GM12878 (cell line): ENCODE measurements at regions of chr14 and their contacts with region 1.

Region 1: GRCh38 chr14:63641473-63642228 is at the start of gene WDR89:
- DNase-seq: peak; percentile 100
- ATAC-seq: peak; percentile 91
- H3K4me3 ChIP-seq: peak within 1 kb of the TSS; percentile 69
- H3K27ac ChIP-seq: peak within 1 kb of the TSS; percentile 99
- H3K4me1 ChIP-seq: peaks cover 17% of the 10 kb centered on the region
- H3K27me3 ChIP-seq: no peaks in the 10 kb centered on the region
- CTCF ChIP-seq: peak; percentile 55 to 79 (median 76)
- EP300 ChIP-seq: peak; percentile 34 to 56; a peak in 2 of 4 replicates
- POLR2A ChIP-seq: peak; percentile 91
- RAD21 ChIP-seq: peak; percentile 33; the same call in 1 of the 2 replicates
- polyA plus RNA-seq, gene WDR89: 17.3 to 17.6 TPM

Region 2: GRCh38 chr14:63388763-63389431 is 252.8 kb before region 1 on chr14:
- CTCF ChIA-PET with region 1: interaction called, 7 read pairs
- POLR2A ChIA-PET with region 1: no interaction called
- RAD21 ChIA-PET with region 1: interaction called, 5 read pairs
- SMC1A ChIA-PET with region 1: interaction called, 10 read pairs
- in situ Hi-C with region 1: no loop called
- intact Hi-C with region 1: no loop called
- DNase-seq: peak; percentile 24
- ATAC-seq: peak; percentile 98
- H3K4me3 ChIP-seq: no peak overlapping the region
- H3K27ac ChIP-seq: no peak overlapping the region
- H3K4me1 ChIP-seq: peaks cover 2% of the 10 kb centered on the region; the same call in 1 of the 2 replicates
- H3K27me3 ChIP-seq: no peaks in the 10 kb centered on the region
- CTCF ChIP-seq: peak; percentile 88 to 89 (median 88)
- EP300 ChIP-seq: no peak
- POLR2A ChIP-seq: no peak
- RAD21 ChIP-seq: peak; percentile 96

Region 3: GRCh38 chr14:63659726-63660125 is 18.1 kb after region 1 on chr14:
- CTCF ChIA-PET with region 1: interaction called, 3 read pairs
- POLR2A ChIA-PET with region 1: interaction called, 11 read pairs
- RAD21 ChIA-PET with region 1: interaction called, 3 read pairs
- SMC1A ChIA-PET with region 1: interaction called, 4 read pairs
- in situ Hi-C with region 1: no loop called
- intact Hi-C with region 1: no loop called
- DNase-seq: no peak
- ATAC-seq: no peak
- H3K4me3 ChIP-seq: no peak overlapping the region
- H3K27ac ChIP-seq: no peak overlapping the region
- H3K4me1 ChIP-seq: no peaks in the 10 kb centered on the region
- H3K27me3 ChIP-seq: no peaks in the 10 kb centered on the region
- CTCF ChIP-seq: no peak
- EP300 ChIP-seq: no peak
- POLR2A ChIP-seq: no peak
- RAD21 ChIP-seq: no peak

Region 4: GRCh38 chr14:63705561-63706070 is 64.0 kb after region 1 on chr14:
- CTCF ChIA-PET with region 1: interaction called, 4 read pairs
- POLR2A ChIA-PET with region 1: interaction called, 17 read pairs
- RAD21 ChIA-PET with region 1: interaction called, 4 read pairs
- SMC1A ChIA-PET with region 1: interaction called, 4 read pairs
- in situ Hi-C with region 1: no loop called
- intact Hi-C with region 1: loop called (anchors 5 kb)
- DNase-seq: peak; percentile 71
- ATAC-seq: peak; percentile 83
- H3K4me3 ChIP-seq: no peak overlapping the region
- H3K27ac ChIP-seq: peak overlapping the region; percentile 62
- H3K4me1 ChIP-seq: peaks cover 30% of the 10 kb centered on the region
- H3K27me3 ChIP-seq: no peaks in the 10 kb centered on the region
- CTCF ChIP-seq: no peak
- EP300 ChIP-seq: peak in 1 of 2 experiments; percentile 44; a peak in 2 of 4 replicates
- POLR2A ChIP-seq: no peak
- RAD21 ChIP-seq: no peak

Region 5: GRCh38 chr14:63727774-63728728 is 86.4 kb after region 1 on chr14 and contains the start of gene SGPP1:
- CTCF ChIA-PET with region 1: interaction called, 27 read pairs
- POLR2A ChIA-PET with region 1: interaction called, 72 read pairs
- RAD21 ChIA-PET with region 1: interaction called, 89 read pairs
- SMC1A ChIA-PET with region 1: interaction called, 99 read pairs
- in situ Hi-C with region 1: no loop called
- intact Hi-C with region 1: loop called (anchors 2 kb)
- DNase-seq: no peak
- ATAC-seq: peak; percentile 84
- H3K4me3 ChIP-seq: peak within 1 kb of the TSS; percentile 91
- H3K27ac ChIP-seq: peak within 1 kb of the TSS; percentile 60
- H3K4me1 ChIP-seq: peaks cover 3% of the 10 kb centered on the region; the same call in 1 of the 2 replicates
- H3K27me3 ChIP-seq: no peaks in the 10 kb centered on the region
- CTCF ChIP-seq: peak; percentile 39 to 59 (median 49); a peak in 5 of 6 replicates
- EP300 ChIP-seq: peak in 1 of 2 experiments; percentile 12; a peak in 1 of 4 replicates
- POLR2A ChIP-seq: peak; percentile 92
- RAD21 ChIP-seq: peak; percentile 49
- polyA plus RNA-seq, gene SGPP1: 8.8 to 17.1 TPM

Region 6: GRCh38 chr14:63770187-63770807 is 128.6 kb after region 1 on chr14:
- CTCF ChIA-PET with region 1: interaction called, 60 read pairs
- POLR2A ChIA-PET with region 1: interaction called, 3 read pairs
- RAD21 ChIA-PET with region 1: interaction called, 20 read pairs
- SMC1A ChIA-PET with region 1: interaction called, 28 read pairs
- in situ Hi-C with region 1: no loop called
- intact Hi-C with region 1: no loop called
- DNase-seq: no peak
- ATAC-seq: peak; percentile 94
- H3K4me3 ChIP-seq: no peak overlapping the region
- H3K27ac ChIP-seq: no peak overlapping the region
- H3K4me1 ChIP-seq: peaks cover 9% of the 10 kb centered on the region
- H3K27me3 ChIP-seq: no peaks in the 10 kb centered on the region
- CTCF ChIP-seq: peak; percentile 62 to 76 (median 67)
- EP300 ChIP-seq: no peak
- POLR2A ChIP-seq: no peak
- RAD21 ChIP-seq: peak; percentile 87

Region 7: DNA sequence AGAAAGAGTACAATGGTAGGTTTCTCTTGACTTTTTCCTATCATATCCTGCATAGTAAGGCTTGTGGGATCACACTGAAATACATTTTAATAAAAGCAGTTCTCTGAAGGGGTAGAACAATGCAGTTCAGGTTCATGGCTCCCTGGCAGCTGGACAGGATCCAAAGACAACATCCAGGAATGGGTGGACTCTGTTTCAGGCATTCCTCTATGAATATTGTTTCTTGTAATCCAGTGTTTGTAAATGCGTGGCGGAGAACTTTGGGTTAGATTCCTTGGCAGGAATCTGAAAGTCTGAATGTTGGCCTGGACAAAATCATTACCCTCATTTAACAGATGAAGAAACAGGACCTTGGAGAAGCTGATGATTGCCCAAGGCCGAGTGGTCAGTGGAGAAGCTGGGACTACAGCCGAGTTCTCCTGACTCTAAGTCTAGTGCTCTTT is 254.6 kb after region 1 on chr14:
- CTCF ChIA-PET with region 1: no interaction called
- POLR2A ChIA-PET with region 1: no interaction called
- RAD21 ChIA-PET with region 1: no interaction called
- SMC1A ChIA-PET with region 1: no interaction called
- in situ Hi-C with region 1: no loop called
- intact Hi-C with region 1: no loop called
- DNase-seq: no peak
- ATAC-seq: no peak
- H3K4me3 ChIP-seq: no peak overlapping the region
- H3K27ac ChIP-seq: no peak overlapping the region
- H3K4me1 ChIP-seq: peaks cover 14% of the 10 kb centered on the region
- H3K27me3 ChIP-seq: no peaks in the 10 kb centered on the region
- CTCF ChIP-seq: no peak
- EP300 ChIP-seq: no peak
- POLR2A ChIP-seq: no peak
- RAD21 ChIP-seq: no peak

Region 8: DNA sequence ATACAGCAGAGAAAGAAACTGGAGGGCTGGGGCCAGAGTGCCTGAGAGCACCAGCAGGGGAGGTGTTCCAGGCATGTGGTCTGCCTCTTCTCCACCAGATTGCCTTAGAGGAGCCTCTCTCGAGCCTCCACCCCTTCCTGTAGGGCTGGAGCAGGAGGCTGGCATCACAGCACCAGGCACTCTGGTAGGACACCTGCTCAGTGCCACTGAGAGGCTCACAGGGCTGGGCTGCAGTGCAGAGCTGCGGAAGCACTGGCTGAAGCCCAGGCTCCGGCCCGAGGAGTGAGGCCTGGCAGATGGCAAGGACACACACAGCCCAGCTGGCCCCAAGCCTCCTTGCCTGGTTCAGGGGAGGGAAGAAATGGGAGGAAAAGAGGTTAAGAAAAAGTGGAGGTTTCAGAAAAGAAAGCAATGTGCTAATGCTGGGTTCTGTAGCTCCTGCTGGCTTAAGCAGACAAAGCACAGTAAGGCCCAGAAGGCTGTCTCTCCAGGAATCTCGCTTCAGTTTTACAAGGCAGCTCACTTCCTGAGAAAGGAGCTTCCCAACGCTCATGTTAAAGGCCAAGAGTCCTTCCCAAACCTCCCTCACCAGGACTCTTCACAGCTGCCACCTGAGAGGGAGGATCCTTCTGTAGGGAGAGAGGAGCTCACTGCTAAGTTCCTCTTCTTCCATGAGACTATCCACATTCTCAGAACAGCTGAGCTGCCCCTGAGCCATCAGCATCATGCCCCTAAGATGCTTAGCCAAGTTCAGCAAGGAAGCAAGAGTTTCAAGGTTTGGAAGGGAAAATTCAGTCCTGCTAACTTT is 1214.3 kb after region 1 on chr14:
- CTCF ChIA-PET with region 1: no interaction called
- POLR2A ChIA-PET with region 1: no interaction called
- RAD21 ChIA-PET with region 1: no interaction called
- SMC1A ChIA-PET with region 1: no interaction called
- in situ Hi-C with region 1: no loop called
- intact Hi-C with region 1: no loop called
- DNase-seq: no peak
- ATAC-seq: no peak
- H3K4me3 ChIP-seq: no peak overlapping the region
- H3K27ac ChIP-seq: no peak overlapping the region
- H3K4me1 ChIP-seq: no peaks in the 10 kb centered on the region
- H3K27me3 ChIP-seq: no peaks in the 10 kb centered on the region; a peak in 2 of 4 replicates
- CTCF ChIP-seq: no peak
- EP300 ChIP-seq: no peak
- POLR2A ChIP-seq: no peak
- RAD21 ChIP-seq: no peak